Activated T-helper 1 cell treated with anti-CD3 and anti-CD28 coated beads, Interleukin-12 subunit alpha, Interleukin-12 subunit beta, Interleukin-2, Interleukin-4 antibody, amounts not matched to agents 30 ng/mL and 10 ng/mL and 1 ng/mL, durations not matched to agents 14 hours and 24 hours and 36 hours (primary cell): ENCODE measurements at regions of chr19 and their contacts with region 1.

Region 1: DNA sequence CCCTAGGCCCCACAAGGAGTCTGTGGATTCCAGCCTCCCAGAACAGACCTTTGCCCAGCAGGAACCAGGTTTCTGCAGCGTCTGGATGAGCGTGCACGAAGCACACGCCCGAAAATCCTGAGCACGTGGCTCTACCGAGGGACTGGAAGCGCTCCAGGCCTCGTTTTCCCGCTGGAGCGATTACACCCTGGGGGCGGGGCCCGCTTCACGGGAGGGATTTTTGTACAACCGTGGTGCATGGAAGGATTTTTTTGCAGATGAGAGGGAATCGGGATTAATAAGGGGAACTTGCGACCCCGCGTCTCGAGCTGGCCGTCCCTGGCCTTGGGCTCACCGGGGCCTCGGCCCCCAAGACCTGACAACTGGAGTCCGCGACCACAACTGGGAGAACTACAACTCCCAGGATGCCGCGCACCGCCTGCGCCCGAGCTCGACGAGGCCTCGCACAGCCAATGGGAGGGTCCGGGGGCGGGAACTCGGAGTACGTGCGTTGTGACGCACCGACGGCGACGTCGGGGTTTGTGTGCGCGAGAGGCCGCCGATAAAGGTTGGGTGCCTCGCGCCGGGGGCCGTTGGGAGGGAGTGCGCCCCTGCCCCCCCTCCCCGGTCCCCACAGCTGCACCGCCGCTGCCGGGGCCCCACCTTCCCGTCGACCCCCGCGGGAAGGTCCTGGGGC is at the start of gene ZNF628:
- DNase-seq: peak; percentile 96
- H3K4me3 Mint-ChIP-seq: peak within 1 kb of the TSS; percentile 91
- H3K27ac Mint-ChIP-seq: peak within 1 kb of the TSS; percentile 79
- H3K4me1 Mint-ChIP-seq: peaks cover 18% of the 10 kb centered on the region
- H3K27me3 Mint-ChIP-seq: peaks cover 2% of the 10 kb centered on the region
- total RNA-seq, gene ZNF628: 7.6 and 10.4 TPM in 2 replicates

Region 2: DNA sequence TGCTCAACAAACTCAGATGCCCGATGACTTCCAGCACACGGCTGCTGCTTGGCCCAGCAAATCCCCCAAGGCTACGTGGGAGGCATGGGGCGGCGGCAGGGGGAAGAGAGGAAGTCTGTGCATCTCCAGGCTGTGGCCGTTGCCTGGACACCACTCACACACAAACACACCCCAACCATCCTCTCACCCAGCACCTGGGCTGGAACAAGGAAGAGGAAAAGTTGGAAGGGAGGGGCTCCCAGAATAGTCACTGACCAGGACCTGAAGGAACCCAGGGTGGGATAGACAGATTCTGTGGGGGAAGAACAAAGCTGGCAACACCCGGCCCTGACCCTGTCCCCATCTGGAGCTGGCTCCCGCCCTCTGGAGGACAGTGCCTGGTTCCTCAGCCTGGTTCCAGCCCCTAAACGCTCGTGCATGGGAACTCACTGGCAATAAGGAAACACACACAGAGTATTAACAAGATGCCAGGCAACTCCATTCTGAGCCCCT is 228.6 kb before region 1 on chr19:
- intact Hi-C with region 1: loop called (anchors 1 kb)
- DNase-seq: no peak
- H3K4me3 Mint-ChIP-seq: no peak overlapping the region
- H3K27ac Mint-ChIP-seq: no peak overlapping the region
- H3K4me1 Mint-ChIP-seq: peaks cover 35% of the 10 kb centered on the region
- H3K27me3 Mint-ChIP-seq: no peaks in the 10 kb centered on the region

Region 3: DNA sequence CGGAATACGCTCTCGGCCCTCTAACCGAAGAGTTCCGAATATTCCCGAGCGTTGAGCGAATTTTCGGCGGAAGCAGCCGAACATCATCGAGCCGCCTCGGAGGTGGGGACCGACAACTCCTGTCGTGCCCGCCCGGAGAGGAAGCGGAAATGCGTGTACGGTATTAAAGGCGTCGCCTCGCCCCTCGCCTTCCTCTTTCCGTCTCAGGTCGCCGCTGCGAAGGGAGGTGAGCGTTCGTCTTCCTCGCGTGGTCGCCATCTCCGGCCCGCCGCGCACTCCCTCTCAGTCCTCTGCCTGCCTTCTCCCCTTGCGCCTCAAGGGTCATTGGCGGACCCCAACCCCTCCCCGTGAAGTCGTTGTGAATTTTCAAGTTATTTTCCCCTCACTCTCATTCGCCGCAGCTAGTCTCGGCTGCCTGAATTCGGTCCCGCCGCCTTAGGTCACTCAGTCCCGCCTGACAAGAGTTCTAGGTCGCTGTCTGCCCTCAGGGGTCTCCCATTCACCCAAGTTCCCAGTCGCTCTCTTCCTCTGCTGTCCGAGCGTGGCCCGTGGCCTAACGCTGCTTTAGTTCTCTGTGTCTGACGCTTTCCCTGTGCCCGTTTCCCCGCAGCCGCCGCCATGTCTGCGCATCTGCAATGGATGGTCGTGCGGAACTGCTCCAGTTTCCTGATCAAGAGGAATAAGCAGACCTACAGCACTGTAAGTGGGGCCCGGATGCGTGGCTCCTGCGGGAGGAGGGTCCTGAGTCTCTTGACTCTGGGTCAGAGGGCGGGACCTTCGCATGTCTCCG is 90.3 kb before region 1 on chr19 and contains the start of gene RPL28:
- intact Hi-C with region 1: loop called (anchors 1 kb)
- DNase-seq: peak; percentile 99
- H3K4me3 Mint-ChIP-seq: peak within 1 kb of the TSS; percentile 99
- H3K27ac Mint-ChIP-seq: peak within 1 kb of the TSS; percentile 96
- H3K4me1 Mint-ChIP-seq: peaks cover 43% of the 10 kb centered on the region
- H3K27me3 Mint-ChIP-seq: no peaks in the 10 kb centered on the region
- total RNA-seq, gene RPL28: 1,835 and 1,847 TPM in 2 replicates

Region 4: GRCh38 chr19:55503502-55504251 is 27.4 kb after region 1 on chr19:
- intact Hi-C with region 1: loop called (anchors 2 kb)
- DNase-seq: peak; percentile 89
- H3K4me3 Mint-ChIP-seq: peak overlapping the region; percentile 78
- H3K27ac Mint-ChIP-seq: peak overlapping the region; percentile 82
- H3K4me1 Mint-ChIP-seq: peaks cover 24% of the 10 kb centered on the region
- H3K27me3 Mint-ChIP-seq: peaks cover 4% of the 10 kb centered on the region

Region 5: GRCh38 chr19:55605207-55605636 is 129.0 kb after region 1 on chr19:
- intact Hi-C with region 1: loop called (anchors 1 kb)
- DNase-seq: peak; percentile 98
- H3K4me3 Mint-ChIP-seq: peak overlapping the region; percentile 86
- H3K27ac Mint-ChIP-seq: peak overlapping the region; percentile 95
- H3K4me1 Mint-ChIP-seq: peaks cover 45% of the 10 kb centered on the region
- H3K27me3 Mint-ChIP-seq: no peaks in the 10 kb centered on the region

Region 6: DNA sequence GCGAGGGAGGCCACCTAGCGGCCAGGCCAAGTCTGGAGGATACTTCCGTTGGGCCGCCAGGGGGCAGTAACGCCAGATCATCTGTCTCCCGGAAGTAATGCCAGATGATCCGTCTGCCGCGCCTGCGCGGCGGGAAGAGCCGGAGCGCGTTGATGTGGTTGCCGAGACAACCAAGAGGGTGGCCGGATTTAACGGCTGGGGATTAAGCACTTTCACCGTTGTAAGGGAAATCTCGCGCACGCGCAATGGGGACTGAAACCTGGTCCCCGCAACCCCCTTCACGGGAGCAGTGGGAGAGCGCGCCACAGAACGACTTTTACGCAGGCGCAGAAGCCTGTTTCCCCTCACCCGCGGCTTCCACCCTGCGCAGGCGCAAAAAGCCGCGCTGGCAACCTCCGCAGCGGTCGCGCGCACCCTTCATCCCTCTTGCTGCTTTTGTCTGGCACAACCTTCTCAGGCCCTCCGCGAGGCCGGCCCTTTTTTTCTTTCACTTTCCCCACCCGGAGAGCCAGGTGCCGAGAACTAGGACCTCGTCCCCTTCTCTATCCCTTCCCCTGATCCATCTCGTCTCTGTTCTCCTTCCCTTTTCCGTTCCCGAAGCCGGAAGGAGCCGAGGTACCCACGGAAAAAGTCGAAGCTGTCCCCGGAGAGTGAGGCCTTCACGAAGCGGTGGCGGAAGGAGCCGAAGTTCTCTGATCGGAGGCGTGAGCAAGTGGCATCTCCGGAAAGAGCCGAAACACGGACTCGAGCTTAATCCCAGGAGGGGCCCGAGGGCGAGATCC is 177.7 kb after region 1 on chr19:
- intact Hi-C with region 1: loop called (anchors 1 kb)
- DNase-seq: peak; percentile 99
- H3K4me3 Mint-ChIP-seq: peak overlapping the region; percentile 93
- H3K27ac Mint-ChIP-seq: peak overlapping the region; percentile 99
- H3K4me1 Mint-ChIP-seq: peaks cover 43% of the 10 kb centered on the region
- H3K27me3 Mint-ChIP-seq: no peaks in the 10 kb centered on the region